Activated CD4-positive, alpha-beta T cell treated with anti-CD3 and anti-CD28 coated beads for 36 hours (primary cell): ENCODE measurements at regions of chr14 and their contacts with region 1.

Region 1: DNA sequence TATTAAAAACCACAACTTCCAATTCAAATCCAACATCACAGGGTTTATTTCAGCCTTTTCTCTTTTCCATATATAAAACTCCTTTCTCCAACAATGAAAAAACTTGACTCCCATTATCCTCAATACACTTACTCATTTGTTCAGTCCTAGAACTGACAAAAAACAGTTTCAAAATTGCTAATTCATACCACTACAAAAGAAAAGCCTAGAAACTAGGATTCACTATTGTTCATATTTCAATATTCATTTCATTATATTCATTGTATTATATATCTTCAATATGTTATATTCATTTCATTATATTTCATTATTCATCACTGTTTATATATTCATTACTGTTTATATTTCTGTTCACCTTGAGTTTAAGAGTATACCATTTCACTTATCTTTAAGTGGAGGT is 85.8 kb downstream of the NUMB start:
- DNase-seq: no peak
- ATAC-seq: peak; percentile 73
- H3K4me3 Mint-ChIP-seq: no peak overlapping the region
- H3K27ac Mint-ChIP-seq: no peak overlapping the region
- H3K4me1 Mint-ChIP-seq: peaks cover 6% of the 10 kb centered on the region
- H3K27me3 Mint-ChIP-seq: no peaks in the 10 kb centered on the region

Region 2: DNA sequence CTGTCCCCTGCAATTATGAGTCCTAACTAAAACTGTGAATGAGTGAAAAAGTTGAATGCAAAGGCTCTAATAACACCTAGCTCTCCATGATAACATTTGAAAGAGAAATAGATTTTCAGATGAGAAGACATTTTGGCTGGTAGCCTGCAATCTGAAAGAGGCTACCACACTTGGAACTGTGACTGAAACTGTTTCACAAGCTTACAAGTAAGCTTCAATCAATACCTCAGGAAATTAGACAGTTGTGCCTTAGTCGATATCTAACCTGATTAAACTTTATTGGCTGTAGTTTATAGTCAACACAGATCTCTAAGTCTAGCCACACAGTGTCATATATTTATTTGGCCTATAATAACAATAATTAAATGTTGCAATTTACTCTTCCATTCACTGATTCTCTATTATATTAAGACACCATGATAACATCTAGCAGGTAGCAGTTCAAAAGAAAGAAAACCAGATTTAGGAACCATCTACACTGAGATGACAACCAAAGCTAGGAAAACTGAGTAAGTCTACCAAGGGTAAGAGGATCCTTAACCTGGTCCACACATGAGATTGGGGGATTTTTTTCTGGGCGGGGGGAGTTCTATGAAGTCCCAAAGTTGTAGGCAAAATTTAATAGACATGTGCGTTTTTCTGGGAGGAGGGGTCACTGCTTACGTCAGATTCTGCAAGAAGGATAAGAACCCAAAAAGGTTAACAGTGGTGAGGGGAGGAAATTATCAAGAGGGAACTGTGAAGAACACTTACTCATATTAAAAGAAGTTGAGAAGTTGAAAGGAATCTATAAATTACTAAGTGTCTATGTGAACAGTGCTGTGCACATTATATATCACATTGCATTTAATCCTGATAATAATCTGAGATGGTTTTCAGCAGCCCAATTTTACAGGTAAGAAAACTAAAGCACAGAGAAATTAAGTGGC is 20.1 kb after region 1 on chr14:
- CTCF ChIA-PET with region 1: no interaction called
- POLR2A ChIA-PET with region 1: no interaction called
- intact Hi-C with region 1: loop called in 1 of 2 experiments (anchors 1 kb)
- DNase-seq: no peak
- ATAC-seq: peak; percentile 93
- H3K4me3 Mint-ChIP-seq: no peak overlapping the region
- H3K27ac Mint-ChIP-seq: no peak overlapping the region
- H3K4me1 Mint-ChIP-seq: peaks cover 19% of the 10 kb centered on the region
- H3K27me3 Mint-ChIP-seq: no peaks in the 10 kb centered on the region